OCI-LY7 (cell line): ENCODE measurements at regions of chr7 and their contacts with region 1.

Region 1: GRCh38 chr7:26675143-26675887 is 189.1 kb downstream of the SKAP2 start:
- DNase-seq: no peak
- H3K4me3 ChIP-seq: no peak overlapping the region
- H3K27ac ChIP-seq: no peak overlapping the region
- H3K4me1 ChIP-seq: no peaks in the 10 kb centered on the region
- CTCF ChIP-seq: no peak

Region 2: GRCh38 chr7:26694713-26695112 is 19.4 kb after region 1 on chr7:
- CTCF ChIA-PET with region 1: no interaction called
- POLR2A ChIA-PET with region 1: interaction called, 13 read pairs
- intact Hi-C with region 1: no loop called
- DNase-seq: no peak
- H3K4me3 ChIP-seq: no peak overlapping the region
- H3K27ac ChIP-seq: no peak overlapping the region
- H3K4me1 ChIP-seq: no peaks in the 10 kb centered on the region
- CTCF ChIP-seq: no peak

Region 3: GRCh38 chr7:26709210-26709990 is 34.1 kb after region 1 on chr7:
- CTCF ChIA-PET with region 1: no interaction called
- POLR2A ChIA-PET with region 1: no interaction called
- intact Hi-C with region 1: no loop called
- DNase-seq: no peak
- H3K4me3 ChIP-seq: no peak overlapping the region
- H3K27ac ChIP-seq: no peak overlapping the region
- H3K4me1 ChIP-seq: no peaks in the 10 kb centered on the region
- CTCF ChIP-seq: no peak